Head of caudate nucleus (tissue), 42 donors: ENCODE measurements at regions of chr6 and their contacts with region 1.

Region 1: DNA sequence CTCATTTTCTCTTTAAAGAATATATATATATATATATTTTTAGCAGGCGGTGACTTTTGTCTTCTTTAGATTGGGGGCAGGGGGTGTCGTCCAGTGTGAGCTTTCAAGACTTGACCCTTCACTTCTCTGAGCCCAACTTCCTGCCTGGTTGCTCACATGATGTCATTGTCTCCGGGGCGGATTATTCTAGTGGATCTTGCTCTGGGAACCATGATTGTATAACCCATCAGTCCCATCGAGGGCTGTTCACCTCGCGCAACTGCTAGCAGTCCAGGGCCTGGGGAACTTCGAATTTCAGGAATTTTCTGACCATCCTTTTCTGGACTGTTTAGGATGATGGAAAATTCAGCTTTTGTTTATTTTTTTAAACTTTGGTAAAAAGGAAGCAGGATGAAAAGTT is 1.0 kb downstream of the IGF2R start:
- DNase-seq: peak in 33 of 42 donors; percentile 19 to 78 (median 53)

Region 2: DNA sequence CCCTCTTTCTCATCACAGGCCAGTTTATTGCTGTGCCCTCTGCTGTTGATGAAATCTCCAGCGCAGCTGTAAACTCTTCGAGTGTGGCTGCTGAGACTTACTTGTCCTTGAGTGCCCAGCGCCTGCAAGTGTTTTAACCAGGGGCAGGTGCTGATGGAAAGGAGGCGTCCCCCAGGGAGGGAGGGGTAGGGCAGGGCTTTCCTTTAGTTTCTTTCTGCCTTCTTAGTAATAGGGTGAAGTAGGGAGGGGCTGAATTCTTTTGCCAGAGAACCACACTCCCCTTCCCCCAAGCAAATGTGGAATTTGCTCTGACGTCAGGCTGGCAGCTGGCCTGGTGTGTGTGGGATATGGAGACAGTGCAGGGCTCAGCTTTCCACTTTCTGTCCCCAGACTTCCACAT is 60.2 kb after region 1 on chr6:
- intact Hi-C with region 1: loop called (anchors 10 kb)
- DNase-seq: peak in 39 of 42 donors; percentile 28 to 82 (median 61)